Motor neuron (in vitro differentiated cells): ENCODE measurements at regions of chr16 and their contacts with region 1.

Region 1: GRCh38 chr16:30984669-30985400 is at the start of gene HSD3B7:
- ATAC-seq: peak; percentile 36 to 90 (median 87)
- H3K4me3 ChIP-seq: peak within 1 kb of the TSS in 2 of 5 donors; percentile 7 to 11
- H3K27ac ChIP-seq: peak within 1 kb of the TSS in 1 of 2 donors; percentile 22
- H3K4me1 ChIP-seq: peaks cover 3 to 11% of the 10 kb centered on the region in 2 donors
- total RNA-seq, gene HSD3B7: 0.67 to 68.7 (median 1.6) TPM

Region 2: GRCh38 chr16:31157136-31157535 is 172.3 kb after region 1 on chr16:
- in situ Hi-C with region 1: loop called in 1 of 9 experiments (anchors 25 kb)
- ATAC-seq: peak in 1 of 8 experiments; percentile 61
- H3K4me3 ChIP-seq: no peak overlapping the region
- H3K27ac ChIP-seq: no peak overlapping the region
- H3K4me1 ChIP-seq: no peaks in the 10 kb centered on the region